GM10248 (cell line): ENCODE measurements at regions of chr2 and their contacts with region 1.

Region 1: GRCh38 chr2:219278655-219279516 is at the start of gene DNAJB2:
- DNase-seq: peak; percentile 100
- CTCF ChIP-seq: no peak

Region 2: GRCh38 chr2:219177552-219178376 is 101.1 kb before region 1 on chr2 and contains the start of gene RETREG2:
- CTCF ChIA-PET with region 1: interaction called, 39 read pairs
- POLR2A ChIA-PET with region 1: interaction called, 7 read pairs
- DNase-seq: peak; percentile 98
- CTCF ChIP-seq: peak; percentile 71

Region 3: GRCh38 chr2:219245148-219245898 is 33.6 kb before region 1 on chr2 and contains the starts of genes GLB1L and STK16:
- CTCF ChIA-PET with region 1: interaction called, 36 read pairs
- POLR2A ChIA-PET with region 1: interaction called, 11 read pairs
- DNase-seq: peak; percentile 96
- CTCF ChIP-seq: no peak

Region 4: DNA sequence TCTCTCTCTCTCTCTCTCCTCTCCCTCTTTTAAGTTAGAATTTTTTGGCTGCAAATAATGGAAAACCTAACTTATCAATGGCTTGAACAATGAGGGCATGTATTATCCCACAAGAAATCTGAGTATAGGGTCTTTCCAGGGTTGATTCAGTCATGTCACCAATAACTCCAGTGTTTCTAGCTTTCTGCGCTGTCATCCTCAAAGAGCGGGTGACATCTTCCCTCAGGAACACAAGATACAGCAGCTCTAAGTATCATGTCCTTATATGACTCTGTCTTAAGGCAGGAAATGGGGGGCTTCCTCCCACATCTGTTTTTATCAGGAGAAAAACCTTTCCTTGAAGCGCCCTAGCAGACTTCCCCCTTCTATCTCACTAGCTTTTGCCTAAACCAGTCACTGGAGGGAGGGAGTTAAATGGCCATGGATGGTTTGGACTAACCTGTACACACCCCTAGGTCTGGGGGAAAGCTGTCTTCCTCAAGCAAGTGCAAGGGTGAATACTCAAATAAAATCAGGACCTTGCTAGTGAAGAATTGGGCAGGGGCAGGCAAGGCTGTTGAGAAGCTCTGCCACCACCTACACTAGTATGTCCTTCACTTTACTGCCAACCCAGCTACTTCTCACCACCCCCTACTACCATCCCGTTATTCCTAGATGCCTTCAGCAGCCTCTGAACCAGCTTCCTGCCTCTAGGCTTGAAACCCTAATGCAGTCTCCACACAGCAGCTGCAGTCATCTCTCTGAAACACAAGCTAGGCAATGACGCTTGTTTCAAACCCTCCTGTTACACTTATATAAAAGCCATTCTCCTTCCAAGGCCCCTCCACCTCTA is 17.6 kb before region 1 on chr2:
- CTCF ChIA-PET with region 1: interaction called, 114 read pairs
- POLR2A ChIA-PET with region 1: interaction called, 3 read pairs
- DNase-seq: no peak
- CTCF ChIP-seq: no peak

Region 5: GRCh38 chr2:219406861-219407230 is 128.0 kb after region 1 on chr2:
- CTCF ChIA-PET with region 1: no interaction called
- POLR2A ChIA-PET with region 1: no interaction called
- DNase-seq: no peak
- CTCF ChIP-seq: no peak

Region 6: GRCh38 chr2:219684721-219685689 is 406.1 kb after region 1 on chr2:
- CTCF ChIA-PET with region 1: no interaction called
- POLR2A ChIA-PET with region 1: no interaction called
- DNase-seq: peak; percentile 78
- CTCF ChIP-seq: no peak